AG04449 (cell line): ENCODE measurements at regions of chr16 and their contacts with region 1.

Region 1: DNA sequence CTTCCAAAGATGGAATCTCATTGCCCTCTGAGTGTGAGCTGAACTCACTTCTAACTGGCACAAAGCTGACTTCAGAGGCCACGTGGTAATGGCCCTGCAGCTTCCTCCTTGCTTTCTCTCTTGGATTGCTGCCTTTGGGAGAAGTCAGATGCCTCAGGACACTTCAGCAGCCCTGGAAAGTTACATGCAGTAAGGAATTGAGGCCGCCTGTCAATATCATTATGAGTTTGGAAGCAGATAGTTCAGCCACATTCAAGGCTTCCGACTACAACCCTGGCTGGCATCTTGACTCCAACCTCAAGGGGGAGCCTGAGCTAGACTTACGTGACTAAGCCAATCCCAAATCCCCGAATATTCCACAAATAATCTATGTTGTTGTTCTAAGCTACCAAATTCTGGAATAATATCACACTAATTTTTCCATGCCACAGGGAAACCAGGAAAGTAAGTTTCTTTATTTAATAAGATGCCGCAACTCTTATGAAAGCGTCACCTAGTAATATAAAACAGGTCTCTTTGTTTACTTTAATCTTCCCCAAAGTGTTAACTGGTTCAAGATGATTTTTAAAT is 13.6 kb downstream of the CEP20 start:
- DNase-seq: no peak
- H3K4me3 ChIP-seq: no peak overlapping the region
- CTCF ChIP-seq: peak; percentile 83

Region 2: GRCh38 chr16:15857724-15858560 is 16.9 kb before region 1 on chr16:
- CTCF ChIA-PET with region 1: interaction called, 33 read pairs
- POLR2A ChIA-PET with region 1: interaction called, 3 read pairs
- DNase-seq: peak; percentile 7
- H3K4me3 ChIP-seq: peak overlapping the region; percentile 57
- CTCF ChIP-seq: no peak

Region 3: DNA sequence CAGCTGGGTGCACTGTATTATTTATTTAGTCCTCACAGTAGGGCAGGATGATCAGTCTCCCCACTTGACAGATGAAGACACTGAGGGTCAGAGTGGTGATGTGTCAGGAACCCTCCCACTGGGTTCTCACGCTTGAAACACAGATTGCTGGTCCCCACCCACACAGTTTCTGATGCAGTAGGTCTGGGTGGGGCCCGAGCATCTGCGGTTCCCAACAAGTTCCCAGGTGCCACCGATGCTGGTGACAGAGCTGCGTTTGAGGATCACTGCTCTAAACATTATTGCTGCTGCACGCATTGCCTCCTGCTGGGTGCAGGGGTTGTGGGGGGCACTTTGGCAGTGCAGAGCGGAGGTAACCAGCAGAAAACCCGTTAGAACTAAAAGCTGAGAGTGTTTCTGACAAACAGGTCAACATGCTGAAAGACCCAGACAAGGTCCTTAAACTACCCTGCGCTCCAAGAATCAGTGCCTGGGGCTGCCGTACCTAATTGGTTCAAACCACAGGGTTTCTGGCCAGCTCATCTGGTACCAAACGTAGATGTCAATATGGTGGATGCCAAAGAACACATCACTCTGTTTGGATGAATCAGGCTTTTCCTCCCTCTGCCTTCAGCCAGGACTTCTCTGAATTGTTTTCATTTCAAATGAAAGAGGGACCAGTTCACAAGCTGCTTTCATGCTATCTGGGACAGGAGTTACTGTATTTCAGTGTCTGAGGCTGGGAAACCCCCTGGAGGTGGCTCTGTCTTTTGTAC is 150.6 kb after region 1 on chr16:
- CTCF ChIA-PET with region 1: interaction called, 13 read pairs
- POLR2A ChIA-PET with region 1: no interaction called
- DNase-seq: peak; percentile 79
- H3K4me3 ChIP-seq: no peak overlapping the region
- CTCF ChIP-seq: no peak

Region 4: DNA sequence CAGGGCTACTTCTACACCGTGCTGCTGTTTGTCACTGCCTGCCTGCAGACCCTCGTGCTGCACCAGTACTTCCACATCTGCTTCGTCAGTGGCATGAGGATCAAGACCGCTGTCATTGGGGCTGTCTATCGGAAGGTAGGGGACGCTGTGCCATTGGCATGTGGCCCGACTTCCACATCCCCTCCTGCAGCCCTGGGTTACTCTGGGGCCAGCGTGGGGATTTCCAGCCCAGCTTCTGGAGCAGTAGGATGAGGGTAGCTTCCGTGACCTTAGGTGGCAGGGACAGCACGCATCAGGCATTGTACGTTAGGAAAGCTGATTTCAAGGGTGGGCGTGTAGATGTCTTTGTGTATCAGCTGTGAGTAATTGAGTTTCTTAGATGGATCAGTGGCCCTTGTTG is 171.0 kb after region 1 on chr16:
- CTCF ChIA-PET with region 1: interaction called, 16 read pairs
- POLR2A ChIA-PET with region 1: no interaction called
- DNase-seq: no peak
- H3K4me3 ChIP-seq: no peak overlapping the region
- CTCF ChIP-seq: no peak

Region 5: GRCh38 chr16:16127469-16128116 is 252.8 kb after region 1 on chr16:
- CTCF ChIA-PET with region 1: interaction called, 66 read pairs
- POLR2A ChIA-PET with region 1: interaction called, 3 read pairs
- DNase-seq: peak; percentile 7
- H3K4me3 ChIP-seq: no peak overlapping the region
- CTCF ChIP-seq: peak; percentile 72